Left lung (tissue), 14 donors: ENCODE measurements at regions of chr5 and their contacts with region 1.

Region 1: GRCh38 chr5:36397901-36398536 is 96.3 kb upstream of the RANBP3L start:
- DNase-seq: peak in 1 of 4 donors; percentile 65
- ATAC-seq: peak; percentile 63
- H3K4me3 ChIP-seq: no peak overlapping the region
- H3K27ac ChIP-seq: no peak overlapping the region
- H3K4me1 ChIP-seq: peaks cover 0 to 3% of the 10 kb centered on the region in 2 donors
- H3K27me3 ChIP-seq: no peaks in the 10 kb centered on the region
- CTCF ChIP-seq: peak in 1 of 2 donors; percentile 33

Region 2: GRCh38 chr5:36279054-36279698 is 118.8 kb before region 1 on chr5:
- intact Hi-C with region 1: loop called in 1 of 2 experiments (anchors 10 kb)
- DNase-seq: no peak
- ATAC-seq: no peak
- H3K4me3 ChIP-seq: no peak overlapping the region
- H3K27ac ChIP-seq: peak overlapping the region in 1 of 2 donors; percentile 35
- H3K4me1 ChIP-seq: peaks cover 0 to 3% of the 10 kb centered on the region in 2 donors
- H3K27me3 ChIP-seq: no peaks in the 10 kb centered on the region
- CTCF ChIP-seq: no peak

Region 3: GRCh38 chr5:36323926-36324781 is 73.9 kb before region 1 on chr5:
- intact Hi-C with region 1: no loop called
- DNase-seq: no peak
- ATAC-seq: peak; percentile 62
- H3K4me3 ChIP-seq: no peak overlapping the region
- H3K27ac ChIP-seq: no peak overlapping the region
- H3K4me1 ChIP-seq: no peaks in the 10 kb centered on the region
- H3K27me3 ChIP-seq: no peaks in the 10 kb centered on the region
- CTCF ChIP-seq: no peak